Right ventricle myocardium inferior (tissue), 1 donor: ENCODE measurements at regions of chr11 and their contacts with region 1.

Region 1: GRCh38 chr11:12827929-12828812 is 153.9 kb downstream of the TEAD1 start:
- DNase-seq: no peak
- ATAC-seq: peak; percentile 86

Region 2: GRCh38 chr11:12888525-12889158 is 60.5 kb after region 1 on chr11:
- intact Hi-C with region 1: loop called (anchors 5 kb)
- DNase-seq: peak; percentile 88
- ATAC-seq: peak; percentile 83